Ovary (tissue), 10 donors: ENCODE measurements at regions of chr10 and their contacts with region 1.

Region 1: GRCh38 chr10:105044902-105045301 is 403.8 kb downstream of the SORCS3 start:
- DNase-seq: no peak
- H3K4me3 ChIP-seq: no peak overlapping the region
- H3K27ac ChIP-seq: no peak overlapping the region
- H3K4me1 ChIP-seq: no peaks in the 10 kb centered on the region
- H3K27me3 ChIP-seq: no peaks in the 10 kb centered on the region
- CTCF ChIP-seq: no peak
- EP300 ChIP-seq: no peak
- POLR2A ChIP-seq: no peak

Region 2: GRCh38 chr10:104993085-104993484 is 51.8 kb before region 1 on chr10:
- intact Hi-C with region 1: loop called in 1 of 4 experiments (anchors 2 kb)
- DNase-seq: no peak
- H3K4me3 ChIP-seq: no peak overlapping the region
- H3K27ac ChIP-seq: no peak overlapping the region
- H3K4me1 ChIP-seq: no peaks in the 10 kb centered on the region
- H3K27me3 ChIP-seq: no peaks in the 10 kb centered on the region
- CTCF ChIP-seq: no peak
- EP300 ChIP-seq: no peak
- POLR2A ChIP-seq: no peak